CD4-positive, alpha-beta memory T cell (primary cell): ENCODE measurements at regions of chr17 and their contacts with region 1.

Region 1: DNA sequence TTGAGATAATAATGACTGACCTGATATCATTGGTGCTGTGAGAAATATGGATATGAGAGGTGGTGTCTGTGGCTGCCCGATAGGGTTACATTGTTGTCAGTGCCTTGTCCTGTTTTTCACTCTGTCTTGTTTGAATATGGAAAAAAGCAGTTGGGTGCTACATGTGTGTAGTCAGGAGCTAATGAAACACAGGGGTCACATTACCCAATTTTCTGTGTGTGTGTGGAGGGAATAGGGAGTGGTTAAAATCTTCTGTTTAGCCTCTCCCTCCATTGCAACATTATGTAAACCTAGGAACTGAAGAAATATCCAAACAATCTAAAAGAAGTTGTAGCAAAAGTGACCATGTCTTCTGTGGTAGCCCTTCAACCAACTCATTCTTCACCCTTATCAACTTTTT is 527.7 kb upstream of the SOX9 start:
- DNase-seq: no peak
- H3K4me3 ChIP-seq: no peak overlapping the region
- H3K4me3 Mint-ChIP-seq: no peak overlapping the region
- H3K27ac ChIP-seq: no peak overlapping the region
- H3K27ac Mint-ChIP-seq: no peak overlapping the region
- H3K4me1 ChIP-seq: no peaks in the 10 kb centered on the region
- H3K4me1 Mint-ChIP-seq: no peaks in the 10 kb centered on the region
- H3K27me3 ChIP-seq: no peaks in the 10 kb centered on the region
- H3K27me3 Mint-ChIP-seq: no peaks in the 10 kb centered on the region

Region 2: GRCh38 chr17:71649941-71650350 is 56.9 kb after region 1 on chr17:
- CTCF ChIA-PET with region 1: no interaction called
- POLR2A ChIA-PET with region 1: no interaction called
- intact Hi-C with region 1: loop called (anchors 10 kb)
- DNase-seq: no peak
- H3K4me3 ChIP-seq: no peak overlapping the region
- H3K4me3 Mint-ChIP-seq: no peak overlapping the region
- H3K27ac ChIP-seq: no peak overlapping the region
- H3K27ac Mint-ChIP-seq: no peak overlapping the region
- H3K4me1 ChIP-seq: no peaks in the 10 kb centered on the region
- H3K4me1 Mint-ChIP-seq: no peaks in the 10 kb centered on the region
- H3K27me3 ChIP-seq: no peaks in the 10 kb centered on the region
- H3K27me3 Mint-ChIP-seq: no peaks in the 10 kb centered on the region